CD14-positive monocyte (primary cell): ENCODE measurements at regions of chr17 and their contacts with region 1.

Region 1: GRCh38 chr17:44363613-44364159 is at the start of gene FAM171A2:
- DNase-seq: peak; percentile 43 to 65 (median 62)
- H3K4me3 ChIP-seq: peak within 1 kb of the TSS; percentile 35 to 76 (median 36)
- H3K4me3 Mint-ChIP-seq: peak within 1 kb of the TSS; percentile 76 to 90
- H3K27ac ChIP-seq: no peak within 1 kb of the TSS
- H3K27ac Mint-ChIP-seq: peak within 1 kb of the TSS in 2 of 7 donors; percentile 45 to 59
- H3K4me1 ChIP-seq: peaks cover 9 to 19% of the 10 kb centered on the region in 2 donors
- H3K4me1 Mint-ChIP-seq: peaks cover 6% of the 10 kb centered on the region
- H3K27me3 ChIP-seq: peaks cover 15 to 44% of the 10 kb centered on the region in 2 donors
- H3K27me3 Mint-ChIP-seq: peaks cover 50 to 72% (median 53%) of the 10 kb centered on the region in 3 donors
- CTCF ChIP-seq: peak; percentile 87
- polyA plus RNA-seq, gene FAM171A2: not detected

Region 2: DNA sequence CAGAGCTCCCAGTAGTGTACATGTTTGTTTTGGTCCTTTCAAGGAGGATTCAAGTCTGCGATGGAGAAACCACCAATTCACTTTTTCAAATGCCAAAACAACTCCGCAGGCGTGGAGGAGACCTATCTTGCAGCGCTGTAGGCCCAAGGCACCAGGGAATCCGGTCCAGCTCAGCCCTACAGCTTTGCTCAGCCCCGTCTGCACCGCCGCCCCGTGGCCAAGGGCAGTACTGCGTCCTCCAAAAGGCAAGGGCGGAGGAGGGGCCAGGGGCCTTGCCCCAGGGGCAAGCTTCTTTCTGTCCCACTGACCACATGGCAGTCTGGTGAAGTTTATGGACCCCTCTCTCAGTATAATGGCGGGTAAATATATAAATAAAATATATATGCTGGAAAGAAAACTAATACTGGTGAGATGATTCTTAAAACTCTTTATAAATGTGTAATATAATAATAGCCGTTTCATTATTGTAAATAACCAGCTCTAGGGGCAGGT is 517.4 kb before region 1 on chr17:
- intact Hi-C with region 1: no loop called
- DNase-seq: peak; percentile 56 to 64 (median 63)
- H3K4me3 ChIP-seq: no peak overlapping the region
- H3K4me3 Mint-ChIP-seq: no peak overlapping the region
- H3K27ac ChIP-seq: no peak overlapping the region
- H3K27ac Mint-ChIP-seq: no peak overlapping the region
- H3K4me1 ChIP-seq: peaks cover 4 to 11% of the 10 kb centered on the region in 2 donors
- H3K4me1 Mint-ChIP-seq: peaks cover 16% of the 10 kb centered on the region
- H3K27me3 ChIP-seq: no peaks in the 10 kb centered on the region
- H3K27me3 Mint-ChIP-seq: peaks cover 3 to 10% (median 4%) of the 10 kb centered on the region in 3 donors
- CTCF ChIP-seq: peak; percentile 99

Region 3: GRCh38 chr17:44210342-44211192 is 153.1 kb before region 1 on chr17:
- intact Hi-C with region 1: loop called in 1 of 2 experiments (anchors 2 kb)
- DNase-seq: peak; percentile 82 to 88 (median 87)
- H3K4me3 ChIP-seq: no peak overlapping the region
- H3K4me3 Mint-ChIP-seq: peak overlapping the region in 1 of 2 donors; percentile 24
- H3K27ac ChIP-seq: no peak overlapping the region
- H3K27ac Mint-ChIP-seq: peak overlapping the region in 3 of 7 donors; percentile 15 to 61 (median 58)
- H3K4me1 ChIP-seq: peaks cover 11 to 41% of the 10 kb centered on the region in 2 donors
- H3K4me1 Mint-ChIP-seq: peaks cover 40% of the 10 kb centered on the region
- H3K27me3 ChIP-seq: no peaks in the 10 kb centered on the region
- H3K27me3 Mint-ChIP-seq: peaks cover 0 to 1% (median 0%) of the 10 kb centered on the region in 3 donors
- CTCF ChIP-seq: peak; percentile 99

Region 4: GRCh38 chr17:44247440-44247841 is 116.2 kb before region 1 on chr17:
- intact Hi-C with region 1: no loop called
- DNase-seq: no peak
- H3K4me3 ChIP-seq: no peak overlapping the region
- H3K4me3 Mint-ChIP-seq: no peak overlapping the region
- H3K27ac ChIP-seq: no peak overlapping the region
- H3K27ac Mint-ChIP-seq: no peak overlapping the region
- H3K4me1 ChIP-seq: peaks cover 13 to 18% of the 10 kb centered on the region in 2 donors
- H3K4me1 Mint-ChIP-seq: peaks cover 28% of the 10 kb centered on the region
- H3K27me3 ChIP-seq: no peaks in the 10 kb centered on the region
- H3K27me3 Mint-ChIP-seq: peaks cover 3 to 7% (median 4%) of the 10 kb centered on the region in 3 donors
- CTCF ChIP-seq: no peak

Region 5: DNA sequence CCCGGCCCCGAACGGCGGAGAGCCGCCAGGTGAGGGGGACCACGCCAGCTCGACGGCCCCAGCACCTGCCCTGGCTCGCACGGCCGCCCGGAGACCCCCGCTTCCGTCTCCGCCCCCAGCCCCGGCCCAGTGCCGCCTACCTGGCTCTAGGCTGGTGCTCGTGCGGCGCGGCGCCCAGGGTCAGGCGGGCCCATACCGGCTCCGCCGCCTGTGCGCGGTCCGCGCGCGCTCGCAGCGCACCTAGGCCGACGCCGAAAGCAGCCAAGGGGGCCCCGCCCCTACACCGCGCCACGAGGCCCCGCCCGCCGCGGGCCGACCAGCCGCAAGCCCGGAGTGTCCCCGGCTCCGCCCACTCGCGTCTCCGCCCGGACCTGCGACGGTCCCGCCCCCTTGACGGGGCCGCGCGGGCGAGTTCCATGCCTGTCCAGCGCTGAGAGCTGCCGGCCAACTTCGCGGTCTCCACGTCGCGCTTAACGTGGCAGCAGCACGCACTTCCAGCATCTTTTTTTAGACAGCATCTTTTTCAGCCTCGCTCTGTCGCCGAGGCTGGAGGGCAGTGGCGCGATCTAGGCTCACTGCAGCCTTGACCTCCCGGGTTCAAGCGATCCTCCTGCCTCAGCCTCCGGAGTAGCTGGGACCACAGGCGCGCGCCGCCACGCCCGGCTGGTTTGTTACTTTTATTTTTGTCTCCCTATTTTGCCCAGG is 39.0 kb before region 1 on chr17 and contains the start of gene SLC25A39:
- intact Hi-C with region 1: loop called in 1 of 2 experiments (anchors 5 kb)
- DNase-seq: peak; percentile 91 to 93 (median 92)
- H3K4me3 ChIP-seq: peak within 1 kb of the TSS; percentile 47 to 85 (median 71)
- H3K4me3 Mint-ChIP-seq: peak within 1 kb of the TSS; percentile 89 to 92
- H3K27ac ChIP-seq: peak within 1 kb of the TSS; percentile 71 to 87
- H3K27ac Mint-ChIP-seq: peak within 1 kb of the TSS; percentile 92 to 96 (median 95)
- H3K4me1 ChIP-seq: peaks cover 29 to 39% of the 10 kb centered on the region in 2 donors
- H3K4me1 Mint-ChIP-seq: peaks cover 34% of the 10 kb centered on the region
- H3K27me3 ChIP-seq: no peaks in the 10 kb centered on the region
- H3K27me3 Mint-ChIP-seq: no peaks in the 10 kb centered on the region
- CTCF ChIP-seq: no peak
- polyA plus RNA-seq, gene SLC25A39: 64.0 to 74.8 (median 64.5) TPM